A673 (cell line): ENCODE measurements at regions of chr18 and their contacts with region 1.

Region 1: DNA sequence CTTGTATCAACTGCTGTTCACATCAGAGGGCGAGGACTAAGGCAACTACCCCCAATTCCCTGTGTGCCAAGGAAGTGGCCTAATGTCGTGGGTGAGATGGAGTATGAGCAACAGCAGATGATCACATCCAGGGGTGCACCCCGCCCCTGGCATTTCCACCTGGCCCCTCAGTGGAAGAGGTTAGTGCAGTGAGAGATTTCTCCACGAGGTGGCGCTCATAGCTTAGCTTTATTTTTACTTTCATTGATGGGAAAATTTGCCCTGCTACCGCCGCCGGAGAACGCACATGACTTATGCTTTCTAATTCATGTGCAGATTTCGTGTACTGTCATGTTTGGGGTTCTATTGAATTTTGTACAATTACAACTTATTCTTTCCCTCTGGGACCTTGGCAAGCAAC is 470.6 kb upstream of the MEX3C start:
- DNase-seq: peak; percentile 87
- H3K4me3 ChIP-seq: no peak overlapping the region
- H3K27ac ChIP-seq: no peak overlapping the region
- H3K4me1 ChIP-seq: peaks cover 32% of the 10 kb centered on the region
- H3K27me3 ChIP-seq: no peaks in the 10 kb centered on the region
- CTCF ChIP-seq: peak; percentile 78

Region 2: DNA sequence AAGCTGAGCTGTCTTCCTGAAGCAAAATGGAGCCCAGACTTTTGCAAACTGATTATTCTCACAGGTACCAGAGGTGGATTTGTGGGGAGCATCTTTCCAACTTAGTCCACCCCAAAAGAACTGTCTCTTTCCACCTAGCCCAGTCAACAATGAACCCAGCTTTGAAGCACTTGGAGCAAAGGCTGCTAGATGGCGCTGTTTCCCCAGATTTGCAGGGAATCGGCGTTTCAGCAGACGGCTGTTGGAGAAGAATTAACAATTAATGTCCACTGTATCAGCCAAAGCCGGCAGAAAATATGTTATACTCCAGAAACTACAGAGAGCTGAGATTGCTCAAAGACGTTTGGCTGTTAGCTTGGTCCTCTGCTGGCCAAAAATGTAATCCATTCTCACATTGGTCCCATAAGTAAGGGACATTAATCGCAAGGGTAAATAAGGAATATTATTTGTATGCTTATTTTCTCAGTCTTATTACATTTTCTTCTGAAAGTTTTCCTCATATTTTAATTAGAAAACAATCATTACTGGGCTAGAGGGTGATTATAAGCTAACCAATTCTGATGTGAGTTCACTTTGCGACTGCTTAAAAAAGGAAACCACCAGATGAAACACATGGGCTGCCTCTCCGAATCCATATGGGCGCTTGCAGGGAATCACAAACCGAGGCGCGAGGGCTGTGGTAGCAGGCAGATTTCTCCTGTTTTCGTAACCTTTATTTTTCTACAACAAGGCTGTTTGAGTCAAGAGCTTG is 46.8 kb before region 1 on chr18:
- CTCF ChIA-PET with region 1: interaction called, 4 read pairs
- POLR2A ChIA-PET with region 1: no interaction called
- intact Hi-C with region 1: loop called (anchors 2 kb)
- DNase-seq: peak; percentile 85
- H3K4me3 ChIP-seq: no peak overlapping the region
- H3K27ac ChIP-seq: no peak overlapping the region
- H3K4me1 ChIP-seq: peaks cover 14% of the 10 kb centered on the region
- H3K27me3 ChIP-seq: no peaks in the 10 kb centered on the region
- CTCF ChIP-seq: peak; percentile 88

Region 3: DNA sequence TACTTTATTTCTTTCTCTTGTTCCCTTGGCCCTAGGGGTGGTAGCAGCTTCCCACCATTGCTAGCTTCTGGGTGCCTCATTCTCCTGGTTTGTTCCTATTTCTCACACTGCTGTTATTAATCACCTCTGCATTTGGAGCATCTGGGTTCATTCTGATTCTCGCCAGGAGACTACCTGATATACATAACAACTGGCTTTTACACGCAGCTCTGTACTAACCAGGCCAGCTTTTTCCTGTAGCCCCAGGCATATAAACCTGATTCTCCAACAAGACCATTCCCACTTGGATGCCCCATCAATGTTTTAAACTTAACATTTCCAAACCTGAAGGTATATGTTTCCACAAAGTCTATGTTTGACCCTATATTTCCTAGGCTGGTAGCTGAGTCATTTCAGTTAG is 268.0 kb after region 1 on chr18:
- CTCF ChIA-PET with region 1: interaction called, 7 read pairs
- POLR2A ChIA-PET with region 1: interaction called, 14 read pairs
- intact Hi-C with region 1: no loop called
- DNase-seq: no peak
- H3K4me3 ChIP-seq: no peak overlapping the region
- H3K27ac ChIP-seq: no peak overlapping the region
- H3K4me1 ChIP-seq: no peaks in the 10 kb centered on the region
- H3K27me3 ChIP-seq: no peaks in the 10 kb centered on the region
- CTCF ChIP-seq: no peak

Region 4: DNA sequence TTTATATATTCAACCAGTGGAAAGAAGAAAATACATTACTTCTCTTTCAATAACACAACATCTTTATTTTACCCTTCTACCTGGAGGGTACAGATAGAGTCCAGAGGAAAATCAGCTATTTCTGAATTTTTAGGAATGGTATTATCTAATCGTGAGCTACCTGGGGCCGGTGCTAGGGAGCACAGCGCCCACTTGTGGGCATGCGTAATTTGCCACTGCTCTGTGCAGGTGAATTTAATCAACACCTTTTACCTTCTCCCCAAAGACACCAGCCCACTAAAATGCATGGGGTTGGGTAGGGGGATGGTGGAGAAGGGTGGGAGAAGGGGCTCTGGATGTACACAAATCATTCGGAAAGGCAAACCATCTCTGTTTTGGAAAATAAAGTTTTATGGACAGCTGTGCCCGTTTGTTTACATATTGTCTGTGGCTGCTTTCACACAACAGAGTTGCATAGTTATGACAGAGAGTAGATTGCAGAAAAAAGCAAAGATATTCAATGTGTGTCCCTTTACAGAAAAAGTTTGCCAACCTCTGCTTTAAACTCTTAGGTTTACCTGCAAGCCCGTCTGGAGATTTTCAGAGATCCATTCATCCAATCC is 620.4 kb after region 1 on chr18:
- CTCF ChIA-PET with region 1: interaction called, 7 read pairs
- POLR2A ChIA-PET with region 1: no interaction called
- intact Hi-C with region 1: loop called (anchors 5 kb)
- DNase-seq: peak; percentile 23
- H3K4me3 ChIP-seq: no peak overlapping the region
- H3K27ac ChIP-seq: no peak overlapping the region
- H3K4me1 ChIP-seq: peaks cover 35% of the 10 kb centered on the region
- H3K27me3 ChIP-seq: no peaks in the 10 kb centered on the region
- CTCF ChIP-seq: peak; percentile 86

Region 5: DNA sequence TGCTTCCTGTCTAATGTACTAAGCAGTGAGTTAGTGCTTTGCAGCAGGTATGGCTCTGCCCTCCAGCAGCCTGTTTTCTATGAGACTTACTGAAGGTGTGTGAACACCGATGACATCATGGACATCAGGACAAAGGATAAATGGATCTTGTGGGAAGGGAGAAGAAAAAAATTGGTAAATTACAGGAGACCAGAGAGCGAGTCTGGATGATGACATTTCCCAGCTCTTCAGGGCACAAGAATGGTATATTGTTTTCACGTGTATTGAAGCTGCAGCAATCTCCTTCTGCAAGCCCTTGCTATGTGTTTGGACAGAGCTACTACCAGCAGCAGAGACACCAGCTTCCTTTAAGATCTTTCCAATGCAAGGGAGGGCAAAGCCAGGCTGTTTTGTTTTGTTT is 719.1 kb after region 1 on chr18:
- CTCF ChIA-PET with region 1: no interaction called
- POLR2A ChIA-PET with region 1: no interaction called
- intact Hi-C with region 1: loop called (anchors 2 kb)
- DNase-seq: peak; percentile 93
- H3K4me3 ChIP-seq: no peak overlapping the region
- H3K27ac ChIP-seq: peak overlapping the region; percentile 98
- H3K4me1 ChIP-seq: peaks cover 95% of the 10 kb centered on the region
- H3K27me3 ChIP-seq: no peaks in the 10 kb centered on the region
- CTCF ChIP-seq: no peak

Region 6: DNA sequence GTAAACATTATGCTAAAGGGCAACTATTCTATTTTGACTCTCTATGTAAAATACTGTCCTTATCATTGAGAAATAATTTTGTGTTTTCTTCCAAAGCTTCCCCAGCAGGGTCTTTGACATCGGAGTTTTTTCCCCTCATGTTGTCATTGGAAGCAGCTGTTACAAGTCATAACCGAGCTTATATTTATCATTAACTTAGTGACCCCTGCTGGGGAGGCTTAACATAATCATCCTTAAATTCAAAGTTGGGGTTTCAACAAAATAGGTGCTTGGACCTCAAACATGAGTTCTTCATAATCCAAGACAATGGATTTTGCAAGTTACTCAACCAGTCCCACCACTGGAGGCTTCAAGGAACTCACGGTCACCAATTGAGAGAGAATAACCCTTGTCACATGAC is 1002.8 kb after region 1 on chr18:
- CTCF ChIA-PET with region 1: no interaction called
- POLR2A ChIA-PET with region 1: no interaction called
- intact Hi-C with region 1: loop called (anchors 10 kb)
- DNase-seq: peak; percentile 73
- H3K4me3 ChIP-seq: no peak overlapping the region
- H3K27ac ChIP-seq: no peak overlapping the region
- H3K4me1 ChIP-seq: peaks cover 61% of the 10 kb centered on the region
- H3K27me3 ChIP-seq: no peaks in the 10 kb centered on the region
- CTCF ChIP-seq: peak; percentile 55

Region 7: DNA sequence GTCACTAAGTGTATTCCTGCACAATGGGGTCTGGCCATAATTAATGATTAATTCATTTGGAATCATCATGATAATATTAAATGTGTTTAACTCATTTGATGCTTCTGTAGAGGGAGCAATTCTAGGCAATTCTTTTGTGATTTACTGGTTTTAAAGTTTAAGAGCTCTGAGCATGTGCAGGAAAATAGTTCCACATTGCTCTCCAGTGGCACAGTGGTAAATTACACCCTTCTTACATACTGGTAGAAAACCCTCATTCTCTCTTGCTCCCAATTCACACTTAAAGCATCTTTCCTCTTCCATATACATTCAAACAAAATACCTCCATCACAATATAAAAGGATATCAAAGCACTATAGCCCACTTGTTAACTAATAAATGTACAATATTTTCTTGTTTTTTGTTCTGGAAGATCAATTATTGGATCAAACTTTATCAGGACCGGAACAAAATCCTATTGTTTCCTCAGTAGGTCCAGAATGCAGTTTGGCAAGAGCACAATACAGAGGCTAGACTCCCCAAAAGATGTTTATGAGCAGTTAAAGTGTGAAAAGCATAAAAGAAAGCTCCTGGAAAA is 1712.0 kb after region 1 on chr18:
- CTCF ChIA-PET with region 1: interaction called, 5 read pairs
- POLR2A ChIA-PET with region 1: interaction called, 12 read pairs
- intact Hi-C with region 1: loop called (anchors 5 kb)
- DNase-seq: peak; percentile 77
- H3K4me3 ChIP-seq: no peak overlapping the region
- H3K27ac ChIP-seq: no peak overlapping the region
- H3K4me1 ChIP-seq: peaks cover 7% of the 10 kb centered on the region
- H3K27me3 ChIP-seq: no peaks in the 10 kb centered on the region
- CTCF ChIP-seq: peak; percentile 77